Activated T-helper 2 cell treated with anti-CD3 and anti-CD28 coated beads, Interferon-gamma antibody, Interleukin-2, Interleukin-4, amounts not matched to agents 10 μg/mL and 5 μg/mL and 100 μg/mL, durations not matched to agents 14 hours and 24 hours and 36 hours (primary cell): ENCODE measurements at regions of chr4 and their contacts with region 1.

Region 1: GRCh38 chr4:113394730-113395530 is 345.5 kb downstream of the ANK2 start:
- DNase-seq: peak; percentile 44
- H3K4me3 Mint-ChIP-seq: no peak overlapping the region
- H3K27ac Mint-ChIP-seq: no peak overlapping the region
- H3K4me1 Mint-ChIP-seq: peaks cover 3% of the 10 kb centered on the region
- H3K27me3 Mint-ChIP-seq: peaks cover 7% of the 10 kb centered on the region

Region 2: DNA sequence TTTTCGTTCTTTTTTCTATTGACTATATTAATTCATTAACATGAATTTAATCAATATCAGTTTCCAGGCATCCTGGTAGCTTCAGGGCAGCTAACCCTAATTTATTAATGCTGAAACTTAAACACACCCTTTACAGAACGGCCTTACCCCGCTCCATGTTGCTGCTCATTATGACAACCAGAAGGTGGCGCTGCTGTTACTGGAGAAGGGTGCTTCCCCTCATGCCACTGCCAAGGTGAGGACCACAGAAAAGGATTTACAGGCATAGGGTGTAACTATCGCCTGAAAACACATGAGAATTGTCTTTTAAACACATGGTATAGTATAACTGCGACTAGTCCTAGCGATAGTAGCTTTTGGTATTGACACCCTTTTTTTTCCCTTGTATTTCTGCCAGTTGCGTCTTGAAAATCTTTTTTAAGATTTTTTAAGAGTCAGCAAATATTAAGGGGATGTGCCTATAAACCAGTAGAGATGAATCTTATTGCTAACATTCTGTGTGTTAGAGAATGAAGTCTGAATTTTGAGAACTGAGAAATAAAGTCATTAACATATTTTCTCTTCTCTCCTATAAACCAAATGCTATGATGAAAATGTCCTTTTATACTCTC is 116.5 kb before region 1 on chr4:
- intact Hi-C with region 1: loop called (anchors 5 kb)
- DNase-seq: peak; percentile 39
- H3K4me3 Mint-ChIP-seq: no peak overlapping the region
- H3K27ac Mint-ChIP-seq: no peak overlapping the region
- H3K4me1 Mint-ChIP-seq: no peaks in the 10 kb centered on the region
- H3K27me3 Mint-ChIP-seq: peaks cover 16% of the 10 kb centered on the region

Region 3: DNA sequence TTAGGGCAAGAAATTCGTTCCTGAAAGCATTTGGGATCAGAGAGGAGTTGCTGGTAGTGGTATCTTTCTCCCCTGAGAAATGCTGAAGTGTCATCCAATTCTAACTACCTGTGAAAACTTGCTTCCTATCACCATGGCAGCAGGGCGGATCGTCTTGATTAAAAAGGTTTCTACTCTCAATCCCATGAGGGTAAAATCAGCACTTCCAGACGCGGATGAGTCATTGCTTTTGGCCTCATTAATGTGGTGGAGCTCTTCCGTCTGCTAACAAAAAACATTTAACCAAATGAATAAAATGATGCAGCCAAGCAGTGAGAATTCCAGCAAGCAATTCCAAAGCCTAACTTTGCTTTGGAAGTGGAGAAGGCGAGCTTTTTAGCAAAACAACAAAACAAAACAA is 41.0 kb after region 1 on chr4:
- intact Hi-C with region 1: loop called (anchors 2 kb)
- DNase-seq: no peak
- H3K4me3 Mint-ChIP-seq: no peak overlapping the region
- H3K27ac Mint-ChIP-seq: no peak overlapping the region
- H3K4me1 Mint-ChIP-seq: peaks cover 12% of the 10 kb centered on the region
- H3K27me3 Mint-ChIP-seq: no peaks in the 10 kb centered on the region

Region 4: GRCh38 chr4:113445286-113445685 is 50.4 kb after region 1 on chr4:
- intact Hi-C with region 1: loop called (anchors 2 kb)
- DNase-seq: no peak
- H3K4me3 Mint-ChIP-seq: no peak overlapping the region
- H3K27ac Mint-ChIP-seq: peak overlapping the region; percentile 80
- H3K4me1 Mint-ChIP-seq: peaks cover 25% of the 10 kb centered on the region
- H3K27me3 Mint-ChIP-seq: no peaks in the 10 kb centered on the region

Region 5: GRCh38 chr4:113901994-113902787 is 507.3 kb after region 1 on chr4:
- intact Hi-C with region 1: loop called (anchors 5 kb)
- DNase-seq: peak; percentile 51
- H3K4me3 Mint-ChIP-seq: peak overlapping the region; percentile 30
- H3K27ac Mint-ChIP-seq: peak overlapping the region; percentile 42
- H3K4me1 Mint-ChIP-seq: peaks cover 43% of the 10 kb centered on the region
- H3K27me3 Mint-ChIP-seq: no peaks in the 10 kb centered on the region

Region 6: GRCh38 chr4:114386637-114387233 is 991.8 kb after region 1 on chr4:
- intact Hi-C with region 1: loop called (anchors 2 kb)
- DNase-seq: no peak
- H3K4me3 Mint-ChIP-seq: no peak overlapping the region
- H3K27ac Mint-ChIP-seq: no peak overlapping the region
- H3K4me1 Mint-ChIP-seq: no peaks in the 10 kb centered on the region
- H3K27me3 Mint-ChIP-seq: peaks cover 3% of the 10 kb centered on the region